ENCODE measurements at regions of chr1 and their contacts with region 1.

Region 1: GRCh38 chr1:234309598-234310459 is 63.4 kb upstream of the COA6 start:
- DNase-seq: no peak
- H3K4me3 ChIP-seq: no peak overlapping the region; the same call in 1 of the 2 replicates
- CTCF ChIP-seq: peak; percentile 87

Region 2: DNA sequence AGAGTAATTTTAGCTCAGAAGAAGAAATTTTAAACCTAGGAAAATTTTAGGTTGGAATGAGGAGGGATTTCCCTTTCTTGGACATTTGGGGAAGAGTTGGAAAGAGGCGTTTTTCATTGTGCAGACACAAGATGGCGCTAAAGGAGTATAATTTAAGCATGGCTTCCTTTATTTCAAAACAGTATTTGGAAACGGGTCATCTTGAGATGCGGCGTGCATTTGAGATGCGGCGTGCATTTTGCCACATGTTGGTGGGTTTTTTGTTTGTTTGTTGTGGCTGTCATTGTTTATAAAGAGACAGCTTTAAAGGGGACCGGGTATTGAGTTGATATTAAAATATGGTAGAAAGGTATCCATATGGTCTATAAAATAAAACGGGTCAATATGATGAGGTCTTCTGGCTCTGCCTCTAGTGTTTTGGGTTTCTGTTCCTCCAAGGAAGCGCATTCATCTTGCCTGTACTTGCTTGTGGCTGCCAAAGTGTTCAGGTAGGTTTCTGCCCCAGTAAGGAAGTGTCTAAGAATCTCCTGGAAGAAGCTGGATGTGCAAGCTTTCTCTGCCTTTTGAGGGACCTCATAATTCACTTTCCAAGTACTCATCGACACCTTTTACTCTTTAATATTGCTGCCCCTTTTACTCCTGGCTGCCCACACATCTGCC is 195.1 kb before region 1 on chr1:
- CTCF ChIA-PET with region 1: interaction called, 48 read pairs
- POLR2A ChIA-PET with region 1: no interaction called
- DNase-seq: no peak
- H3K4me3 ChIP-seq: no peak overlapping the region; the same call in 1 of the 2 replicates
- CTCF ChIP-seq: peak; percentile 47

Region 3: DNA sequence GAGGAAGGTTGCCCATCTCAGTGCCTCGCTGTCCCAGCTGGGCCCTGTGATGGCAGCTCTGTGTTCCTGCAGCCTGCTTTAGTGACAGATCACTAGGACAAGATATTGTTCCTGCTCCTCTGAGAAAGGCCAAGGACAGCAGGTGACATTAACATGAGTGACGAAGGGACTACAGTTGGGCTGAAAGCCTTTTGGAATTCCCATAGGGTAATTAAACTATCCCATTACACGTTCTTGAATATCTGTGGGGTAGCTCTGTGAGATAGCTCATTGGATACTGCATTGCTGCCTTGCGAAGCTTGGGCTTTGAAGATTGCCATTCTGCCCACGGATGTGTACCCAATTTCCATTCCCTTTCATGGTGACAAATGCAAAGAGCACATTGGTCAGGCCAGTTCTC is 14.8 kb before region 1 on chr1:
- CTCF ChIA-PET with region 1: interaction called, 35 read pairs
- POLR2A ChIA-PET with region 1: no interaction called
- DNase-seq: no peak
- H3K4me3 ChIP-seq: no peak overlapping the region
- CTCF ChIP-seq: no peak

Region 4: GRCh38 chr1:234326497-234327366 is 16.9 kb after region 1 on chr1:
- CTCF ChIA-PET with region 1: interaction called, 36 read pairs
- POLR2A ChIA-PET with region 1: no interaction called
- DNase-seq: no peak
- H3K4me3 ChIP-seq: peak overlapping the region; percentile 49
- CTCF ChIP-seq: peak; percentile 69

Measured in AG04449 (cell line).